IMR-90 (cell line): ENCODE measurements at regions of chr18 and their contacts with region 1.

Region 1: GRCh38 chr18:35143622-35144596 is 96.9 kb upstream of the ZNF397 start:
- DNase-seq: peak; percentile 55
- ATAC-seq: peak; percentile 89
- H3K4me3 ChIP-seq: no peak overlapping the region
- H3K27ac ChIP-seq: no peak overlapping the region
- H3K4me1 ChIP-seq: no peaks in the 10 kb centered on the region
- H3K27me3 ChIP-seq: no peaks in the 10 kb centered on the region
- CTCF ChIP-seq: peak; percentile 83
- POLR2A ChIP-seq: 0 out of 2 replicates have a peak, but pooled peaks have one; percentile 38
- RAD21 ChIP-seq: peak; percentile 95

Region 2: GRCh38 chr18:34867520-34867919 is 276.4 kb before region 1 on chr18:
- CTCF ChIA-PET with region 1: interaction called, 5 read pairs
- POLR2A ChIA-PET with region 1: no interaction called
- dilution Hi-C with region 1: no loop called
- in situ Hi-C with region 1: loop called (anchors 10 kb)
- intact Hi-C with region 1: loop called (anchors 1 kb)
- DNase-seq: no peak
- ATAC-seq: no peak
- H3K4me3 ChIP-seq: no peak overlapping the region
- H3K27ac ChIP-seq: no peak overlapping the region
- H3K4me1 ChIP-seq: peaks cover 2% of the 10 kb centered on the region; the same call in 1 of the 2 replicates
- H3K27me3 ChIP-seq: no peaks in the 10 kb centered on the region
- CTCF ChIP-seq: no peak
- POLR2A ChIP-seq: no peak
- RAD21 ChIP-seq: no peak

Region 3: DNA sequence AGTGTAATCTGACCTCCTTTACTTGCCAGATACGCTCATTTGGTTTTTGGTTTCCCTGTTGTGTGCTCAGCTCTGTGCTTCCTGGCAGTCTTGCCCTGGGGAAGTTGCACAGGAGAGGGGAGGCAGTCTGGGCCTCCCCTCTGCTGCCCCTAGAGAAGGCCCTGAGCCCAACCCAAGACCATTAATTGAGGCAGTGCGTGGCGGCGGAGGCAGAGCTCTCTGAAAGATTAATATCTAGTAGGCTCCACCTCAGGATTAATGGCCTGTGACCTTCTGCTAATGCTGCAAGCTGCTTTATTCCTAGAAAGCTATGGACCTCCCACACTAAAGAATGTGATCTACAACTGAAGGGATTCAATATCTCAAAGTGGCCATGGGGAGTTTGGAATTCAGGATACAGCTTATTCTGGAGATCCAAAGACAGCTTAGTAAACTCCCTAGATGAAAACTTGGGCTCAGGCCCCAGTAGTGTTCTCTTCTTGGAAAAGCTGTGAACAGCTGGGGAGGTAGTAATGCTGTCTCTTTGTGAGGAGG is 144.1 kb before region 1 on chr18:
- CTCF ChIA-PET with region 1: no interaction called
- POLR2A ChIA-PET with region 1: no interaction called
- dilution Hi-C with region 1: no loop called
- in situ Hi-C with region 1: loop called (anchors 5 kb)
- intact Hi-C with region 1: no loop called
- DNase-seq: no peak
- ATAC-seq: no peak
- H3K4me3 ChIP-seq: no peak overlapping the region
- H3K27ac ChIP-seq: no peak overlapping the region
- H3K4me1 ChIP-seq: no peaks in the 10 kb centered on the region
- H3K27me3 ChIP-seq: peaks cover 3% of the 10 kb centered on the region; the same call in 1 of the 2 replicates
- CTCF ChIP-seq: no peak
- POLR2A ChIP-seq: no peak
- RAD21 ChIP-seq: no peak

Region 4: DNA sequence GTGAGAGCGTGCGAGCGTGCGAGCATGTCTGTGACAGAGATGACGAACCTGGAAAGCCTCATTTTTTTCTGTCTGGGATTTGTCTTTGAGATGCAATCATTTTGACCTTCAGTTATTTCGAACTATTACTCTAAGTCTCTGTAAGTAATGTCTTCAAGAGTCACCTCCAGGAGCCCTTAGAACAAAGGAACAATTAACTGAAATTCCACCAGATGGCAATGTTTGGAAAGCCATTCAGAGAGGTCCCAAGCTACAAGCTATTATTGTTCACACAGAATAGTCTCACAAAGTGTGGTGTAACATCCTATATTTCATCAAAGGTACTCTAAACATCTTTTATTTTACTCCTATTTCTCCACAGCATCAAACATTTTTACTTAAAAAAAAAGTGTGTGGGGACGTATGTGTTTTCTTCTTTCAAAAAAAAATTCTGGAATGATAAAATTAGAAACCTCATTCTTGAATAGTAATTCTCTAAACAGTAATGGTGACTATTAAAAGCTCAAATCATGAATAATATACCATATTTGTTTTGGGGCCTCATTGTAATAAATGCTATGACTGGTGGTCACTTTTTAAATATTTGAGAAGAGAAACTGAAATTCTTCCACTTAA is 137.8 kb before region 1 on chr18:
- CTCF ChIA-PET with region 1: interaction called, 9 read pairs
- POLR2A ChIA-PET with region 1: no interaction called
- dilution Hi-C with region 1: no loop called
- in situ Hi-C with region 1: loop called (anchors 5 kb)
- intact Hi-C with region 1: loop called (anchors 1 kb)
- DNase-seq: peak; percentile 70
- ATAC-seq: peak; percentile 88
- H3K4me3 ChIP-seq: no peak overlapping the region
- H3K27ac ChIP-seq: no peak overlapping the region
- H3K4me1 ChIP-seq: no peaks in the 10 kb centered on the region
- H3K27me3 ChIP-seq: no peaks in the 10 kb centered on the region
- CTCF ChIP-seq: peak; percentile 70
- POLR2A ChIP-seq: no peak
- RAD21 ChIP-seq: peak; percentile 90

Region 5: GRCh38 chr18:35029770-35030169 is 114.1 kb before region 1 on chr18:
- CTCF ChIA-PET with region 1: interaction called, 9 read pairs
- POLR2A ChIA-PET with region 1: no interaction called
- dilution Hi-C with region 1: no loop called
- in situ Hi-C with region 1: no loop called
- intact Hi-C with region 1: loop called (anchors 5 kb)
- DNase-seq: no peak
- ATAC-seq: no peak
- H3K4me3 ChIP-seq: no peak overlapping the region
- H3K27ac ChIP-seq: no peak overlapping the region
- H3K4me1 ChIP-seq: peaks cover 10% of the 10 kb centered on the region
- H3K27me3 ChIP-seq: no peaks in the 10 kb centered on the region
- CTCF ChIP-seq: no peak
- POLR2A ChIP-seq: no peak
- RAD21 ChIP-seq: no peak